CD8-positive, alpha-beta memory T cell (primary cell): ENCODE measurements at regions of chr14 and their contacts with region 1.

Region 1: GRCh38 chr14:60164712-60165546 is at the start of gene DHRS7:
- DNase-seq: peak; percentile 56 to 74 (median 65)
- H3K4me3 ChIP-seq: peak within 1 kb of the TSS; percentile 92
- H3K4me3 Mint-ChIP-seq: peak within 1 kb of the TSS; percentile 92 to 100 (median 97)
- H3K27ac ChIP-seq: peak within 1 kb of the TSS; percentile 91
- H3K27ac Mint-ChIP-seq: peak within 1 kb of the TSS; percentile 95 to 100 (median 99)
- H3K4me1 ChIP-seq: peaks cover 31% of the 10 kb centered on the region
- H3K4me1 Mint-ChIP-seq: peaks cover 50 to 60% (median 54%) of the 10 kb centered on the region in 3 donors
- H3K27me3 ChIP-seq: no peaks in the 10 kb centered on the region
- H3K27me3 Mint-ChIP-seq: no peaks in the 10 kb centered on the region
- total RNA-seq, gene DHRS7: 79.8 to 80.6 TPM

Region 2: GRCh38 chr14:59964251-59965007 is 200.5 kb before region 1 on chr14:
- CTCF ChIA-PET with region 1: interaction called, 36 read pairs
- POLR2A ChIA-PET with region 1: interaction called, 9 read pairs
- DNase-seq: peak in 1 of 5 donors; percentile 44
- H3K4me3 ChIP-seq: no peak overlapping the region
- H3K4me3 Mint-ChIP-seq: peak overlapping the region; percentile 83 to 94 (median 90)
- H3K27ac ChIP-seq: no peak overlapping the region
- H3K27ac Mint-ChIP-seq: peak overlapping the region in 7 of 8 donors; percentile 56 to 98 (median 93)
- H3K4me1 ChIP-seq: no peaks in the 10 kb centered on the region
- H3K4me1 Mint-ChIP-seq: peaks cover 10 to 23% (median 14%) of the 10 kb centered on the region in 3 donors
- H3K27me3 ChIP-seq: no peaks in the 10 kb centered on the region
- H3K27me3 Mint-ChIP-seq: peaks cover 4 to 6% of the 10 kb centered on the region in 2 donors

Region 3: GRCh38 chr14:60064491-60065072 is 100.3 kb before region 1 on chr14:
- CTCF ChIA-PET with region 1: interaction called, 23 read pairs
- POLR2A ChIA-PET with region 1: no interaction called
- DNase-seq: peak in 2 of 5 donors; percentile 23 to 29
- H3K4me3 ChIP-seq: no peak overlapping the region
- H3K4me3 Mint-ChIP-seq: no peak overlapping the region
- H3K27ac ChIP-seq: no peak overlapping the region
- H3K27ac Mint-ChIP-seq: no peak overlapping the region
- H3K4me1 ChIP-seq: no peaks in the 10 kb centered on the region
- H3K4me1 Mint-ChIP-seq: no peaks in the 10 kb centered on the region
- H3K27me3 ChIP-seq: no peaks in the 10 kb centered on the region
- H3K27me3 Mint-ChIP-seq: peaks cover 2 to 17% of the 10 kb centered on the region in 2 donors

Region 4: GRCh38 chr14:60091550-60092530 is 73.1 kb before region 1 on chr14 and contains the start of gene PCNX4:
- CTCF ChIA-PET with region 1: interaction called, 19 read pairs
- POLR2A ChIA-PET with region 1: interaction called, 15 read pairs
- DNase-seq: peak; percentile 90 to 97 (median 95)
- H3K4me3 ChIP-seq: peak within 1 kb of the TSS; percentile 90
- H3K4me3 Mint-ChIP-seq: peak within 1 kb of the TSS; percentile 86 to 96 (median 93)
- H3K27ac ChIP-seq: peak within 1 kb of the TSS; percentile 90
- H3K27ac Mint-ChIP-seq: peak within 1 kb of the TSS; percentile 85 to 99 (median 95)
- H3K4me1 ChIP-seq: peaks cover 28% of the 10 kb centered on the region
- H3K4me1 Mint-ChIP-seq: peaks cover 39 to 54% (median 48%) of the 10 kb centered on the region in 3 donors
- H3K27me3 ChIP-seq: no peaks in the 10 kb centered on the region
- H3K27me3 Mint-ChIP-seq: peaks cover 0 to 3% of the 10 kb centered on the region in 2 donors
- total RNA-seq, gene PCNX4: 38.8 to 43.5 TPM

Region 5: DNA sequence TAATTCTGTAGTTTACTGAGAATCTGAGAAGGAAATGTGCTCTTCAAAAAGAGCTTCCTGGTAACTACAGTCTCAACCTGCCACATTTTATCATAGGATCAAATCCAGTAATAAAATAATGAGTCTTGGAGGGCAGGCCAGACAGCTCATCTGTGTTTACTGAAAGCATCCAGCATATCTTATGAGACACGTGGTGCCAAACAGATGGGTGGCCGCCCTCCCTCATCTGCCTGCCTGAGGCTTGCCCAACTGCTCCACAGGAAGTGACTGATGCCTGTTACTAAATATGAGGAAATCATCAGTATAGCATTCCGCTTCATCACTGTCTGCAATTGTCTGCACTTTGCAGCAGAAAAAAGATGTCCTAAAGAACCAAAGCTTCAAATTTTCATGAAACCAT is 13.2 kb before region 1 on chr14:
- CTCF ChIA-PET with region 1: interaction called, 15 read pairs
- POLR2A ChIA-PET with region 1: interaction called, 17 read pairs
- DNase-seq: peak; percentile 50 to 81 (median 63)
- H3K4me3 ChIP-seq: no peak overlapping the region
- H3K4me3 Mint-ChIP-seq: peak overlapping the region in 6 of 7 donors; percentile 14 to 57 (median 42)
- H3K27ac ChIP-seq: peak overlapping the region; percentile 30
- H3K27ac Mint-ChIP-seq: peak overlapping the region; percentile 83 to 97 (median 94)
- H3K4me1 ChIP-seq: peaks cover 38% of the 10 kb centered on the region
- H3K4me1 Mint-ChIP-seq: peaks cover 52 to 57% (median 53%) of the 10 kb centered on the region in 3 donors
- H3K27me3 ChIP-seq: no peaks in the 10 kb centered on the region
- H3K27me3 Mint-ChIP-seq: no peaks in the 10 kb centered on the region

Region 6: DNA sequence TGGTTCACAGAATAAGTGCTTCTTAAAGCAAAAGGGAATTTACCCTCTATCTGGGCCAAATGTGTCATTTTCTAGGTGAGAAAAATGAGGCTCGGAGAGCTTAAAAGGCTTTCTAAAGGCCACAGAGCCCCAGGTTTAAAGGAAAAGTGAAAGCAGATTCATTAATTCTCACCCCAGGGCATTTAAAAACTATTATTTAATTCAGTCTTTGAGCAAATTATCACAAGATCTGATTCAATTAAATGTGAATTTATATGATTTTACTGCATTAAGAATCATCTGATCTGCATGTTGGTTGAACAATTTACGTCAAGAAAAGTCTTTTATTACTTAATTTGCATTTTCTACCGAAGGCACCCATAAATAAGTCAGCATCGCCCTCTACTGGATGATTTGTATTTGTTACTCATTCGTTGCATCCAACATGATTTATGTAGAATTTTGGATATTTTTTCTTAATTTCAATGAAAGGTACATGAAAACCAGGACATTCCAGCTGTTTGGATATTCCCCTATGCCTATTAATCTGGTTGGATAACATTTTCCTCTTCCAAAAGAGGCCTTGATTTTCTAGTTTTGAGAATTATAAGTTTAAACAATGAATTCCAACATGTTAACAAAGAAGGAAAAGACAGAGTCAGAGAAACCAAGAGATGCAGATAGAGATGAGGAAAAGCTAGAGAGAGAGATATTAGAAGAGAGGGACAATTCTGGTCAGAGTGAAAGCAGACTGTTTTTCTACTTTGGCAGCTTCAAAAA is 19.4 kb after region 1 on chr14:
- CTCF ChIA-PET with region 1: interaction called, 49 read pairs
- POLR2A ChIA-PET with region 1: interaction called, 9 read pairs
- DNase-seq: peak in 3 of 5 donors; percentile 12 to 72 (median 71)
- H3K4me3 ChIP-seq: peak overlapping the region; percentile 42
- H3K4me3 Mint-ChIP-seq: peak overlapping the region; percentile 74 to 89 (median 80)
- H3K27ac ChIP-seq: peak overlapping the region; percentile 12
- H3K27ac Mint-ChIP-seq: peak overlapping the region; percentile 48 to 97 (median 92)
- H3K4me1 ChIP-seq: peaks cover 6% of the 10 kb centered on the region
- H3K4me1 Mint-ChIP-seq: peaks cover 7 to 15% (median 11%) of the 10 kb centered on the region in 3 donors
- H3K27me3 ChIP-seq: no peaks in the 10 kb centered on the region
- H3K27me3 Mint-ChIP-seq: peaks cover 0 to 2% of the 10 kb centered on the region in 2 donors

Region 7: GRCh38 chr14:60248697-60249318 is 83.9 kb after region 1 on chr14 and contains the start of gene PPM1A:
- CTCF ChIA-PET with region 1: interaction called, 12 read pairs
- POLR2A ChIA-PET with region 1: interaction called, 37 read pairs
- DNase-seq: peak; percentile 93 to 97 (median 94)
- H3K4me3 ChIP-seq: peak within 1 kb of the TSS; percentile 78
- H3K4me3 Mint-ChIP-seq: peak within 1 kb of the TSS; percentile 90 to 99 (median 95)
- H3K27ac ChIP-seq: peak within 1 kb of the TSS; percentile 94
- H3K27ac Mint-ChIP-seq: peak within 1 kb of the TSS; percentile 97 to 100 (median 100)
- H3K4me1 ChIP-seq: peaks cover 24% of the 10 kb centered on the region
- H3K4me1 Mint-ChIP-seq: peaks cover 50 to 52% (median 52%) of the 10 kb centered on the region in 3 donors
- H3K27me3 ChIP-seq: no peaks in the 10 kb centered on the region
- H3K27me3 Mint-ChIP-seq: peaks cover 0 to 4% of the 10 kb centered on the region in 2 donors
- total RNA-seq, gene PPM1A: 54.6 to 55.3 TPM